H1 (cell line): ENCODE measurements at regions of chr19 and their contacts with region 1.

Region 1: GRCh38 chr19:41353466-41354342 is at the start of gene TGFB1:
- DNase-seq: peak in 1 of 2 experiments; percentile 86
- H3K4me3 ChIP-seq: peak within 1 kb of the TSS; percentile 52 to 75 (median 70)
- H3K27ac ChIP-seq: no peak within 1 kb of the TSS
- H3K4me1 ChIP-seq: peaks cover 0 to 14% (median 4%) of the 10 kb centered on the region in 4 experiments; a peak in 5 of 7 replicates
- H3K27me3 ChIP-seq: peaks cover 10 to 36% (median 28%) of the 10 kb centered on the region in 4 experiments
- CTCF ChIP-seq: peak; percentile 85 to 89 (median 86)
- EP300 ChIP-seq: no peak
- POLR2A ChIP-seq: no peak
- RAD21 ChIP-seq: peak; percentile 29 to 55; a peak in 3 of 4 replicates
- total RNA-seq, gene TGFB1: 10.6 and 12.2 TPM in 2 replicates

Region 2: GRCh38 chr19:41321600-41322270 is 32.0 kb before region 1 on chr19:
- CTCF ChIA-PET with region 1: interaction called, 13 read pairs
- POLR2A ChIA-PET with region 1: interaction called, 7 read pairs
- DNase-seq: peak; percentile 70 to 80
- H3K4me3 ChIP-seq: no peak overlapping the region
- H3K27ac ChIP-seq: peak overlapping the region; percentile 17; the same call in 1 of the 2 replicates
- H3K4me1 ChIP-seq: peaks cover 12 to 27% (median 13%) of the 10 kb centered on the region in 4 experiments
- H3K27me3 ChIP-seq: peaks cover 0 to 6% (median 0%) of the 10 kb centered on the region in 4 experiments; a peak in 2 of 7 replicates
- CTCF ChIP-seq: peak; percentile 65 to 90 (median 69)
- EP300 ChIP-seq: no peak
- POLR2A ChIP-seq: no peak
- RAD21 ChIP-seq: peak; percentile 42 to 54; a peak in 3 of 4 replicates

Region 3: DNA sequence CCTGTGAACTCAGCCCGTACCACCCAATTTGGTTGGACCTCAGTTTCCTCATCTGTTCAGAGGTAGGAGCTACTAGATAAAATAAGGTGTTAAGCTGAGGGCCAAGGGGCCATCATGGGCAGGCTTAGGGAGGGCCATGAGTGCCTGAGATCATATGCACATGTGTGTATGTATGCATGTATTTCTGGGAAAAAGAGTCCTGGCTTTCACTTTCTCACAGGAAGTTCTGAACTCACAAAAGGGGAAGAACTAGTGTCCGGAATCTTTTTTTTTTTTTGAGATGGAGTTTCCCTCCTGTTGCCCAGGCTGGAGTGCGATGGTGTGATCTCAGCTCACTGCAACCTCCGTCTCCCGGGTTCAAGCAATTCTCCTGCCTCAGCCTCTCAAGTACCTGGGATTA is 18.9 kb before region 1 on chr19:
- CTCF ChIA-PET with region 1: interaction called, 25 read pairs
- POLR2A ChIA-PET with region 1: no interaction called
- DNase-seq: no peak
- H3K4me3 ChIP-seq: no peak overlapping the region
- H3K27ac ChIP-seq: no peak overlapping the region
- H3K4me1 ChIP-seq: no peaks in the 10 kb centered on the region
- H3K27me3 ChIP-seq: peaks cover 0 to 3% (median 0%) of the 10 kb centered on the region in 4 experiments; a peak in 3 of 7 replicates
- CTCF ChIP-seq: no peak
- EP300 ChIP-seq: no peak
- POLR2A ChIP-seq: no peak
- RAD21 ChIP-seq: no peak

Region 4: DNA sequence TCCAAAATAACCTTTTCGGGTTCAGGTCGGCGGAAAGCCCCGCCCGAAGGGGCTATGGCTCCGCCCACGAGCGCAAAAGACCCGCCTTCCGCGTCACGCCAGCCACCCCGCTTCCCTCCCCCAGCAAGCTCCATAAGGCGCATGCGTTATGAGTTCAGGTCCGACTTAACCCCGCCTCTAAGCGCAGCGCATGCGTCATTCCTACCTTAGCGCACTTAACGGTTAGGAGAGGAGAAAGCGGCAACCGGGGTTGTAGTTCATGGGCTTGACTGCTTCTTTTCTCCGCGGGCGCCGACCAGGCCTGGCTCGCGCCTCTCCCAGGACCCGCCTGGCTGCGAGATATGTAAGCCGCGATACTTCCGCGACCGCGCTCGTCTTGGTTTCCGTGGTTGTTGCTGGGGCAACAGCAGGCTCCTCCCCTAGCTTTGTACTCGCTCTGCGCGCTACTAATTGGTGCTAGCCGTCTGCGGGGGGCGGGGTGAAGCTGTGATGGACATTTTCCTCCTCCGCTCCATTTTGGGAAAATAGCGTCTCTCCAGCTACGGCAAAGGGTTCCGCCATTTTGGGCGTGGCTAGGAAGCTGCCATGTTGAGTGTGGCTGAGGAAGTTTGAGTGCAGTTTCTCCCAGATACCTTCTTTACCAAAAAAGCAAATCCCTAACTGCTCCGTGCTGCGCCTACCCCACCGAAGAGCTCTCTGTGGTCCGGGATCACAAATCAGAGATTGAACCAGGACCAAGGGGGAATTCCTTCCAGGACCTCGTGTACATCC is 10.2 kb after region 1 on chr19 and contains the start of gene B9D2:
- CTCF ChIA-PET with region 1: interaction called, 37 read pairs
- POLR2A ChIA-PET with region 1: interaction called, 29 read pairs
- DNase-seq: peak; percentile 93 to 97
- H3K4me3 ChIP-seq: peak within 1 kb of the TSS; percentile 84 to 95 (median 90)
- H3K27ac ChIP-seq: peak within 1 kb of the TSS; percentile 98
- H3K4me1 ChIP-seq: peaks cover 0 to 6% (median 2%) of the 10 kb centered on the region in 4 experiments; a peak in 2 of 7 replicates
- H3K27me3 ChIP-seq: no peaks in the 10 kb centered on the region
- CTCF ChIP-seq: no peak
- EP300 ChIP-seq: no peak
- POLR2A ChIP-seq: peak in 1 of 2 experiments; percentile 77; a peak in 2 of 3 replicates
- RAD21 ChIP-seq: no peak
- total RNA-seq, gene B9D2: 4.9 and 5.0 TPM in 2 replicates

Region 5: GRCh38 chr19:41376241-41376997 is 22.7 kb after region 1 on chr19 and contains the start of gene TMEM91:
- CTCF ChIA-PET with region 1: interaction called, 33 read pairs
- POLR2A ChIA-PET with region 1: interaction called, 5 read pairs
- DNase-seq: peak in 1 of 2 experiments; percentile 85
- H3K4me3 ChIP-seq: peak within 1 kb of the TSS; percentile 61 to 82 (median 71)
- H3K27ac ChIP-seq: no peak within 1 kb of the TSS
- H3K4me1 ChIP-seq: peaks cover 0 to 5% (median 4%) of the 10 kb centered on the region in 4 experiments; a peak in 5 of 7 replicates
- H3K27me3 ChIP-seq: peaks cover 0 to 9% (median 2%) of the 10 kb centered on the region in 4 experiments; a peak in 4 of 7 replicates
- CTCF ChIP-seq: no peak
- EP300 ChIP-seq: no peak
- POLR2A ChIP-seq: peak in 1 of 2 experiments; percentile 40; a peak in 2 of 3 replicates
- RAD21 ChIP-seq: no peak
- total RNA-seq, gene TMEM91: 4.2 and 5.3 TPM in 2 replicates

Region 6: GRCh38 chr19:41531438-41532311 is 178.0 kb after region 1 on chr19:
- CTCF ChIA-PET with region 1: no interaction called
- POLR2A ChIA-PET with region 1: no interaction called
- DNase-seq: no peak
- H3K4me3 ChIP-seq: no peak overlapping the region
- H3K27ac ChIP-seq: no peak overlapping the region
- H3K4me1 ChIP-seq: no peaks in the 10 kb centered on the region
- H3K27me3 ChIP-seq: no peaks in the 10 kb centered on the region; a peak in 1 of 7 replicates
- CTCF ChIP-seq: no peak
- EP300 ChIP-seq: no peak
- POLR2A ChIP-seq: no peak
- RAD21 ChIP-seq: no peak